Lower lobe of right lung (tissue), 2 donors: ENCODE measurements at regions of chr1 and their contacts with region 1.

Region 1: DNA sequence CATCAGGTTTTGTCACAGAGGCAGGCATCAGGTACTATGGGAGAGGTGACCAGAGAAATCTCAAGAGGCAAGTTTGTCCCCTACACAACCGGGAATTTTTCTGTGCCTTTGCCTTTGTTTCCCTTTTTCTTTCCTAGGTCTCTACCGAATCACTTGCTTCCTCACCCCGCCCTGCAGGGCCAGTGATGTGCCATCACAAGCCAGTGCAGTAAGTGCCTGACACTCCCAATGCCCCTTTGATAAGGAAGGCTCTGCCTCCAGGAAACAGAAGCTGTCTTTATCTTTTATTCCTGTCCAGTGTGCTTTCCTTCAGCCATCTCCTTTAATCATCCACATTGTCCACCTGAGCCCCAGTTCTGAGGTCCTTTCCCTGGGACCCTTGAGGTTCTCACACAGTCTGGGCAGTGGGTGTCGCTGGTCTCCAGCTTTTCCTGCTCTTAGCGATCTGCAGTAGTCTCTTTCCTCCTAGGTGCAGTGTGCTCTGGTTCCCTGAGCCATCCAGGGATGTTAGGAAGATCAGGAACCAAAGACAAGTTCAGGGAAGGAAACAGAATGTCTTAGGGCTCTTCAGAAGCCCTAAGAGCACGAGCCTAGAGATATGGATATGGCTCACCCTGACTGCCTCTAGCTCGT is 36.6 kb downstream of the GJA5 start:
- DNase-seq: peak; percentile 50
- ATAC-seq: peak; percentile 89 to 94
- H3K4me3 ChIP-seq: no peak overlapping the region
- H3K27ac ChIP-seq: no peak overlapping the region
- H3K4me1 ChIP-seq: no peaks in the 10 kb centered on the region
- H3K27me3 ChIP-seq: no peaks in the 10 kb centered on the region
- CTCF ChIP-seq: peak; percentile 70

Region 2: DNA sequence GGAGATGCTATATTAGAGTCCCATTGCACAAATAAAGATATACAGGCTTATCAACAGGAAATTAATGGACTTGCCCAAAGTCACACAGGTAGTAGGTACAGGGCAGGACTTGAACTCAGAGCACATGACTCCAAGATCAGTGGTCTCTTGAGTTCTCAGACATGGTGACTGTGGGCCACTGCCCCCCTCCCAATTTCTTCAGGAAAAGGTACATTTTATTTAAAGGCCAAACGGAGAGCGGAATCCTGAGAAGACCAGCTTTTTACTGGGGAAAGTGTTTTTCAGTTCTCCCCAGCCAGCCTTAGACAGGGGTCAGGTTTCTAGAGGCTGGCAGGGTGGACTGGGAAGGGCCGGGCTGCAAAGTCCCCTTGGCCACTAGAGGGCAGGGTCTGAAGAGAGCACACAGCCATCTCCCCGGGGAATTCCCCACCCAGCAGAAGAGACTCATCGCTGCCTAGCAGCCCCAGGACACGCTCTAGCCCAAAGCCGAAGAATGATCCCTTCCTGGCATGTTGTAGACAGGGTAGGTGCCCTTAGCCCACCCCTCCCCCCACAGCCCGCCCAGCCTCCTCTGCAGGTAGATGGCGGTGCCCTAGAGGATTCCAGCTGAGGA is 83.1 kb before region 1 on chr1:
- intact Hi-C with region 1: no loop called
- DNase-seq: peak; percentile 80
- ATAC-seq: peak; percentile 96 to 97
- H3K4me3 ChIP-seq: no peak overlapping the region
- H3K27ac ChIP-seq: no peak overlapping the region
- H3K4me1 ChIP-seq: peaks cover 9% of the 10 kb centered on the region
- H3K27me3 ChIP-seq: no peaks in the 10 kb centered on the region
- CTCF ChIP-seq: peak; percentile 83

Region 3: GRCh38 chr1:147815498-147815897 is 91.7 kb after region 1 on chr1:
- intact Hi-C with region 1: no loop called
- DNase-seq: no peak
- ATAC-seq: no peak
- H3K4me3 ChIP-seq: no peak overlapping the region
- H3K27ac ChIP-seq: no peak overlapping the region
- H3K4me1 ChIP-seq: peaks cover 19% of the 10 kb centered on the region
- H3K27me3 ChIP-seq: no peaks in the 10 kb centered on the region
- CTCF ChIP-seq: no peak

Region 4: GRCh38 chr1:147890177-147890790 is 166.5 kb after region 1 on chr1:
- intact Hi-C with region 1: loop called (anchors 10 kb)
- DNase-seq: peak; percentile 78
- ATAC-seq: peak; percentile 87 to 93
- H3K4me3 ChIP-seq: no peak overlapping the region
- H3K27ac ChIP-seq: no peak overlapping the region
- H3K4me1 ChIP-seq: peaks cover 6% of the 10 kb centered on the region
- H3K27me3 ChIP-seq: no peaks in the 10 kb centered on the region
- CTCF ChIP-seq: peak; percentile 73